Gastrocnemius medialis (tissue), 4 donors: ENCODE measurements at regions of chr12 and their contacts with region 1.

Region 1: GRCh38 chr12:55715833-55716581 is at the start of gene BLOC1S1:
- DNase-seq: peak; percentile 90 to 96
- ATAC-seq: peak; percentile 56 to 63
- H3K4me3 ChIP-seq: peak within 1 kb of the TSS; percentile 69 to 95 (median 81)
- H3K27ac ChIP-seq: peak within 1 kb of the TSS; percentile 95 to 100 (median 99)
- H3K4me1 ChIP-seq: peaks cover 80 to 85% of the 10 kb centered on the region in 2 donors
- H3K27me3 ChIP-seq: no peaks in the 10 kb centered on the region
- CTCF ChIP-seq: peak in 4 of 5 experiments; percentile 13 to 58 (median 38)
- POLR2A ChIP-seq: peak; percentile 54 to 56
- total RNA-seq, gene BLOC1S1: 255 to 434 (median 300) TPM

Region 2: DNA sequence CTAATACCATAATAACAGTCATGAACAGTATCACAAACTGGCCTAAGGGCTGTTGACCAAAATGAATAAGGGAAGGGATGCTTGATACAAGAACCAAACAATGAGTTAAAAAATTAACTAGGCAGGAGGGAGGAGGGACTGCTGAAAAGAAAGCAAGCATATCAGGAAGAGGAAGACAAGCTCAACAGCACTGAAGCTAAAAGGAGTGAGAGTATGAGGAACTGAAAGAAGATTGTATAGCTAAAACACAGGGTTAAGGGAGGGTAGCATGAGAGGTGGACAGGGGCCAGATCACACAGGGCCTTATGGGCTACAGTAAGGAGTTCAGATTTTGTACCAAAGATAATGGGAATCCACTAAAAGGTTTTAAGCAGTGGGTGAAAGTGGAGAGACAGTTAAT is 42.4 kb before region 1 on chr12:
- in situ Hi-C with region 1: loop called in 2 of 4 experiments (anchors 5 to 10 kb)
- intact Hi-C with region 1: no loop called
- DNase-seq: no peak
- ATAC-seq: peak in 1 of 2 donors; percentile 45
- H3K4me3 ChIP-seq: no peak overlapping the region
- H3K27ac ChIP-seq: no peak overlapping the region
- H3K4me1 ChIP-seq: no peaks in the 10 kb centered on the region
- H3K27me3 ChIP-seq: no peaks in the 10 kb centered on the region
- CTCF ChIP-seq: no peak
- POLR2A ChIP-seq: no peak

Region 3: DNA sequence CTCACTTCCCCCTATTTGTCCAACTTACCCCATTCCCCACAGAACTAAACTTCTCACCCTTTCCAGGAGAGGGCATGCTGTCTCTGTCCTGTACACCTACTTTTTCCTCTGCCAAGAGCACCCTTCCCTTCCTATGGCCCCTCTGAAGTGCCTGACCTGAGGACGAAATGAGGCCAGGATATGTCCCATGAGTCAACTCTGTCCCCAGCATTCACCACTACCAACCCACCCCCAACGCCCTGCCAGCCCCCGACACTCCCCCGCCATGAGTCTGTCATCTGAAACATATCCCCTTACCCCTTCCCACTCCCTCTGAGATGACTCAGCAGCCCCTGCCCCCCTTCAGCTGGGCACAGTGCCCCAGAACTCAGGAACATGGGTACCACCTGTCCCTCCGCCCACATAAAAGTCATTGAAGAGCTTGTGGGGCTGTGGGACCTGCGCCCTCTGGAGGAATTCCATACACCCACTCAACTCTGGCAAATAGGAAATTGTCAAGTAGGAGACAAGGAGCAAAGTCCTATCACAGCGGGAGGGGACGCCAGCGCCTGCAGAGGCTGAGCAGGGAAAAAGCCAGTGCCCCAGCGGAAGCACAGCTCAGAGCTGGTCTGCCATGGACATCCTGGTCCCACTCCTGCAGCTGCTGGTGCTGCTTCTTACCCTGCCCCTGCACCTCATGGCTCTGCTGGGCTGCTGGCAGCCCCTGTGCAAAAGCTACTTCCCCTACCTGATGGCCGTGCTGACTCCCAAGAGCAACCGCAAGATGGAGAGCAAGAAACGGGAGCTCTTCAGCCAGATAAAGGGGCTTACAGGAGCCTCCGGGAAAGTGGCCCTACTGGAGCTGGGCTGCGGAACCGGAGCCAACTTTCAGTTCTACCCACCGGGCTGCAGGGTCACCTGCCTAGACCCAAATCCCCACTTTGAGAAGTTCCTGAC is 34.6 kb before region 1 on chr12:
- in situ Hi-C with region 1: loop called in 3 of 4 experiments (anchors 5 to 10 kb)
- intact Hi-C with region 1: loop called (anchors 1 kb)
- DNase-seq: peak; percentile 63 to 85
- ATAC-seq: peak; percentile 93 to 94
- H3K4me3 ChIP-seq: peak overlapping the region; percentile 33 to 56 (median 40)
- H3K27ac ChIP-seq: peak overlapping the region; percentile 68 to 87 (median 80)
- H3K4me1 ChIP-seq: peaks cover 7 to 17% of the 10 kb centered on the region in 2 donors
- H3K27me3 ChIP-seq: no peaks in the 10 kb centered on the region
- CTCF ChIP-seq: peak; percentile 21 to 57 (median 53)
- POLR2A ChIP-seq: peak in 1 of 2 donors; percentile 39

Region 4: GRCh38 chr12:56266693-56267442 is 550.9 kb after region 1 on chr12 and contains the start of gene COQ10A:
- in situ Hi-C with region 1: no loop called
- intact Hi-C with region 1: loop called (anchors 10 kb)
- DNase-seq: peak; percentile 89 to 94
- ATAC-seq: peak; percentile 64 to 75
- H3K4me3 ChIP-seq: peak within 1 kb of the TSS; percentile 70 to 88 (median 80)
- H3K27ac ChIP-seq: peak within 1 kb of the TSS; percentile 95 to 99 (median 98)
- H3K4me1 ChIP-seq: peaks cover 49 to 52% of the 10 kb centered on the region in 2 donors
- H3K27me3 ChIP-seq: no peaks in the 10 kb centered on the region
- CTCF ChIP-seq: peak; percentile 48 to 81 (median 78)
- POLR2A ChIP-seq: peak; percentile 97 to 98
- total RNA-seq, gene COQ10A: 17.7 to 90.1 (median 54.5) TPM